SK-N-SH (cell line): ENCODE measurements at regions of chr2 and their contacts with region 1.

Region 1: GRCh38 chr2:111134055-111134454 is 13.3 kb downstream of the BCL2L11 start:
- DNase-seq: no peak
- H3K4me3 ChIP-seq: no peak overlapping the region
- H3K27ac ChIP-seq: no peak overlapping the region; a peak in 1 of 4 replicates
- H3K4me1 ChIP-seq: peaks cover 0 to 12% of the 10 kb centered on the region in 2 experiments; a peak in 1 of 4 replicates
- H3K27me3 ChIP-seq: no peaks in the 10 kb centered on the region
- CTCF ChIP-seq: peak; percentile 35
- EP300 ChIP-seq: no peak
- RAD21 ChIP-seq: no peak

Region 2: GRCh38 chr2:111148925-111149324 is 14.9 kb after region 1 on chr2:
- CTCF ChIA-PET with region 1: interaction called, 31 read pairs
- POLR2A ChIA-PET with region 1: no interaction called
- DNase-seq: no peak
- H3K4me3 ChIP-seq: no peak overlapping the region
- H3K27ac ChIP-seq: peak overlapping the region in 1 of 2 experiments; percentile 39; a peak in 2 of 4 replicates
- H3K4me1 ChIP-seq: peaks cover 0 to 41% of the 10 kb centered on the region in 2 experiments; a peak in 2 of 4 replicates
- H3K27me3 ChIP-seq: no peaks in the 10 kb centered on the region
- CTCF ChIP-seq: no peak
- EP300 ChIP-seq: no peak
- RAD21 ChIP-seq: no peak